Panc1 (cell line): ENCODE measurements at regions of chr20 and their contacts with region 1.

Region 1: GRCh38 chr20:63452821-63453523 is 19.5 kb downstream of the KCNQ2 start:
- DNase-seq: no peak
- ATAC-seq: peak; percentile 68
- H3K4me3 ChIP-seq: no peak overlapping the region
- H3K27ac ChIP-seq: peak overlapping the region; percentile 17; the same call in 1 of the 2 replicates
- H3K4me1 ChIP-seq: peaks cover 29% of the 10 kb centered on the region
- H3K27me3 ChIP-seq: no peaks in the 10 kb centered on the region
- CTCF ChIP-seq: no peak; the same call in 1 of the 2 replicates

Region 2: DNA sequence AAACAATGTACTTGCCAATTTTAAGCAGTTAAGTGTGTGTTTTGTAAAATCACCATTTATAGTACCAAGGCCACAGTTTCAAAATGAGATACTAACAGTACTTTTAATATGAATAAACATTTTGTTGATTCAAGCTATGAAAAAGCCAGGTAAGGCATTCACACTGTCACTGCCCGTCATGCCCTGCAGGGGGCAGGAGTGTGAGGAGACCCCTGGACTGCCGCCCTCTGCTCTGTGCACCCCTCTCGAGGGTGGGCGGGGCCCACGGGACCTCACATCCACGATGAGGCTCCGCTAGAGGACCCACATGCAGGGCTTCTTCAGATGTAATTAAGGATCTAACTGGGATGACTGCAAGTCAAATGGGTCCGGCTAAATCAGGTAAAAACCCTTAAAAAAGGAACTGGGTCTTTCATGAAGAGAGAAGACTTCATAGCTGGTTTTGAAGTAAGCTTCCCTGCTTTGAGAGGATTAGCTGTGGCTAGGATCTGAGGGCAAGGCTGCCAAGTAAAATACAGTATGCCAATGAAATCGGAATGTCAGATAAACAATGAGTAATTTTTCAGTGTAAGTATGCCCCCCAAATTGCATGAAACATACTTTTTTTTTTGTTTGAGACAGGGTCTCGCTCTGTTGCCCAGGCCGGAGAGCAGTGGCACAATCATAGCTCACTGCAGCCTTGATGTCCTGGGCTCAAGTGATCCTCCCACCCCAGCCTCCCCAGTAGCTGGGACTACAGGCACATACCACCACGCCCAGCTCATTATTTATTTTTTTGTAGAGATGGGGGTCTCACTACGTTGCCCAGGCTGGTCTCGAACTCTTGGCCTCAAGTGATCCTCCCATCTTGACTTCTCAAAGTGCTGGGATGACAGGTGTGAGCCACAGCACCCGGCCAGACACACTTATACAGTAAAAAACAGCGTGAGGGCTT is 545.3 kb before region 1 on chr20:
- CTCF ChIA-PET with region 1: no interaction called
- POLR2A ChIA-PET with region 1: no interaction called
- in situ Hi-C with region 1: no loop called
- intact Hi-C with region 1: no loop called
- DNase-seq: no peak
- ATAC-seq: peak; percentile 51; the same call in 1 of the 2 replicates
- H3K4me3 ChIP-seq: no peak overlapping the region
- H3K27ac ChIP-seq: no peak overlapping the region
- H3K4me1 ChIP-seq: no peaks in the 10 kb centered on the region
- H3K27me3 ChIP-seq: no peaks in the 10 kb centered on the region
- CTCF ChIP-seq: no peak; the same call in none of the 2 replicates

Region 3: DNA sequence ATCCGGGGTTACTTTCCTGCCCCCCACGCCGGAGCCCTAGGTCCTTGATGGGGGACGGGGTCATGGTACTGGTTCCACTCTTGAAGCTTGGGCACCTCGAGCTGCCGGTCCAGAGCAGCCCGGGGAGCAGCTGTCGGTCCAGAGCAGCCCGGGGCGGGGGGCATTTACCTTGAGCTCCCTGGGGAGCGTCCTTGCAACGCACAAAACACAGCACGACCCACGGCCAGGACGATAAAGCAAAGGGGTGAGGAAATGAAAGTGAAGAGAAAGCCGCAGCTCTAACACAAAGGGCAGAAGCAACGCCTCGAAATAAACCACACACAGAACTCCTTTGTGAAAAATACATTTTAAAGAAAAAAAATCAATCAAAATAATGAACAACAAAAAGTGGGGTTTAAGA is 19.6 kb before region 1 on chr20:
- CTCF ChIA-PET with region 1: interaction called, 17 read pairs
- POLR2A ChIA-PET with region 1: no interaction called
- in situ Hi-C with region 1: no loop called
- intact Hi-C with region 1: no loop called
- DNase-seq: no peak
- ATAC-seq: no peak
- H3K4me3 ChIP-seq: no peak overlapping the region
- H3K27ac ChIP-seq: no peak overlapping the region
- H3K4me1 ChIP-seq: no peaks in the 10 kb centered on the region; the same call in 1 of the 2 replicates
- H3K27me3 ChIP-seq: no peaks in the 10 kb centered on the region
- CTCF ChIP-seq: no peak

Region 4: DNA sequence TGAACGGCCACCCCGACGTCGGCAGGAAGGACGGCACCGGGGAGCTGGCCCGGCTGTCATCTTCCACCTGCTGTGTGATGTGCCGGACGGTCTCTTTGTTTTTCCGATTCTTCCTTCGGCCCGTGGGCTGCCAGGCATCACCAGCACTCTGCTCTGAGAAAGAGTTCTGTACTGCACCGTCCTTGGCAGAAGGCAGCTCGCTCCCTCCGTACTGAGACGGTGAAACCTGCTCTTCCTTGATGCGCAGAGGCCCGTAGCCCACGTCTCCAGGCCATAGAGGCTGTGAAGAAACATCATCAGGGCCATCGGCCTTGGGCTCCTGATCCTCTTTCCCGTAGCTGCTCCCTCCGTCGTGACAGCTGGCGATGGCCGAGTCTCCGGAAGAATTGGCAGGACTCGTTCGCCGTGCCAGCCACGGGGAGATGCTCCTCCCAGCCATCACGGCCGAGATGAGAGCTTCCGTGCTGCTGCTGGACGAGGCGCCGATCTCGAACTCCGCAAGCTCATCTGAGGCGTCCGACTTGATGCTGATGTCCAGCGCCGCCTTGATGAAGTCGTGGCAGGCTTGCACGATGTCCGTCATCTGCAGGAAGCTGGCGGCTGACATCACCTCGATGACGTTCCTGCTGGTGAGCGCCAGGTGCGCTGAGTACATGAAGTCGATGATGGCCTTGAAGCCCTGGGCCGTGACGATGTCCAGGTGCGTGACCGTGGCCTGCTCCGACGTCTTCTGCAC is 337.0 kb after region 1 on chr20:
- CTCF ChIA-PET with region 1: interaction called, 13 read pairs
- POLR2A ChIA-PET with region 1: no interaction called
- in situ Hi-C with region 1: no loop called
- intact Hi-C with region 1: no loop called
- DNase-seq: no peak
- ATAC-seq: no peak
- H3K4me3 ChIP-seq: no peak overlapping the region
- H3K27ac ChIP-seq: no peak overlapping the region
- H3K4me1 ChIP-seq: no peaks in the 10 kb centered on the region
- H3K27me3 ChIP-seq: no peaks in the 10 kb centered on the region
- CTCF ChIP-seq: no peak